Sigmoid colon (tissue), 7 donors: ENCODE measurements at regions of chr16 and their contacts with region 1.

Region 1: GRCh38 chr16:4506450-4506849 is 30.3 kb downstream of the HMOX2 start:
- DNase-seq: peak; percentile 82
- H3K4me3 ChIP-seq: no peak overlapping the region
- H3K27ac ChIP-seq: no peak overlapping the region
- H3K4me1 ChIP-seq: peaks cover 0 to 21% (median 12%) of the 10 kb centered on the region in 4 donors
- H3K27me3 ChIP-seq: no peaks in the 10 kb centered on the region
- CTCF ChIP-seq: peak; percentile 63 to 79 (median 75)
- EP300 ChIP-seq: no peak
- POLR2A ChIP-seq: no peak

Region 2: GRCh38 chr16:4548124-4548523 is 41.7 kb after region 1 on chr16:
- intact Hi-C with region 1: loop called (anchors 2 kb)
- DNase-seq: no peak
- H3K4me3 ChIP-seq: no peak overlapping the region
- H3K27ac ChIP-seq: no peak overlapping the region
- H3K4me1 ChIP-seq: no peaks in the 10 kb centered on the region
- H3K27me3 ChIP-seq: no peaks in the 10 kb centered on the region
- CTCF ChIP-seq: no peak
- EP300 ChIP-seq: no peak
- POLR2A ChIP-seq: no peak

Region 3: GRCh38 chr16:4580245-4580644 is 73.8 kb after region 1 on chr16:
- intact Hi-C with region 1: loop called (anchors 1 kb)
- DNase-seq: no peak
- H3K4me3 ChIP-seq: no peak overlapping the region
- H3K27ac ChIP-seq: no peak overlapping the region
- H3K4me1 ChIP-seq: no peaks in the 10 kb centered on the region
- H3K27me3 ChIP-seq: no peaks in the 10 kb centered on the region
- CTCF ChIP-seq: no peak
- EP300 ChIP-seq: no peak
- POLR2A ChIP-seq: no peak